ENCODE measurements at regions of chr16 and their contacts with region 1.

Region 1: DNA sequence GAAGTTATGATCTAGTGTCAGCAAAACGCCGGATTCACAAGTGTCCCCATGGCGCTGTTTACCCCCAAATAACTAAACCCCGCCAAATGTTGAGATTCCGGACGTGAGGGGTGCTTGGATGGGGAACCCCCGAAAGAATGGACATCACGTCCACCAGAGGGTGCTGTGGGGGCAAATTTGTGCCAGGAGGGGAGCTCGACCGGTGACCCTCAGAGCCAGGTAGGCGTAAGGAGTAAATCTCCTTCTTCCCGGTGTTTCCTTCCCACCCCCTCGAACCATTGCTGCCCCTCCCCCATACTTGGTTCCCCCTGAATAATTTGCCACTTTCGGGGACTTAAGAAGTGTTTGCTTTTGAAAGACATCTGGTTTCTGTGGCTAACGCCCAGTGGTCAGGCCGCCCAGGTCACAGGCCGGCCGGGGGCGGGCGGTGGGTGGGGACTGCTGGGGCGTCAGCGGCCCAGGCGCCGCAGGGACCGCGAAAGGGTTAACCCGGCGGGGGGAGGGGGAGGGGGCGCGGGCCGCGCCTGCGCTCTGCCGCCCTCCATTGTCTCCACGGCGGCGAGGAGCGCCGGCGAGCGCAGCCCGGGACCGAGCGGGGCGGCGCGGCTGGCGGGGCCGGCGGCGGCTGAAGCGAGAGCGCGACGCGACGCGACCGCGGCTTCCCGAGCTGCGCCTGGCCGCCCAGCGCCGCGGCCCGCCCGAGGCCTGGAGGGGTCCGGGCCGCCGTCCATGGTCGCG is at the start of gene ZNRF1:
- DNase-seq: peak; percentile 50 to 82 (median 67)
- ATAC-seq: peak; percentile 91
- H3K4me3 ChIP-seq: peak within 1 kb of the TSS; percentile 69
- H3K4me3 Mint-ChIP-seq: peak within 1 kb of the TSS; percentile 79 to 92 (median 87)
- H3K27ac ChIP-seq: peak within 1 kb of the TSS; percentile 54
- H3K27ac Mint-ChIP-seq: peak within 1 kb of the TSS; percentile 81 to 91 (median 86)
- H3K4me1 ChIP-seq: peaks cover 5 to 9% of the 10 kb centered on the region in 2 donors
- H3K4me1 Mint-ChIP-seq: peaks cover 5 to 42% (median 17%) of the 10 kb centered on the region in 7 donors
- H3K27me3 ChIP-seq: no peaks in the 10 kb centered on the region
- H3K27me3 Mint-ChIP-seq: peaks cover 0 to 19% (median 0%) of the 10 kb centered on the region in 5 donors
- total RNA-seq, gene ZNRF1: 1.8 to 27.9 (median 2.6) TPM

Region 2: GRCh38 chr16:74709441-74709877 is 289.2 kb before region 1 on chr16:
- CTCF ChIA-PET with region 1: no interaction called
- POLR2A ChIA-PET with region 1: no interaction called
- intact Hi-C with region 1: loop called (anchors 1 to 2 kb)
- DNase-seq: peak; percentile 62 to 86 (median 78)
- ATAC-seq: peak; percentile 99
- H3K4me3 ChIP-seq: no peak overlapping the region
- H3K4me3 Mint-ChIP-seq: no peak overlapping the region
- H3K27ac ChIP-seq: no peak overlapping the region
- H3K27ac Mint-ChIP-seq: peak overlapping the region in 5 of 9 donors; percentile 3 to 85 (median 29)
- H3K4me1 ChIP-seq: no peaks in the 10 kb centered on the region
- H3K4me1 Mint-ChIP-seq: peaks cover 4 to 10% (median 6%) of the 10 kb centered on the region in 7 donors
- H3K27me3 ChIP-seq: no peaks in the 10 kb centered on the region
- H3K27me3 Mint-ChIP-seq: peaks cover 0 to 6% (median 0%) of the 10 kb centered on the region in 5 donors

Region 3: GRCh38 chr16:74942977-74943918 is 55.4 kb before region 1 on chr16:
- CTCF ChIA-PET with region 1: no interaction called
- POLR2A ChIA-PET with region 1: no interaction called
- intact Hi-C with region 1: no loop called
- DNase-seq: no peak
- ATAC-seq: peak; percentile 40
- H3K4me3 ChIP-seq: no peak overlapping the region
- H3K4me3 Mint-ChIP-seq: no peak overlapping the region
- H3K27ac ChIP-seq: no peak overlapping the region
- H3K27ac Mint-ChIP-seq: peak overlapping the region in 3 of 9 donors; percentile 14 to 36 (median 28)
- H3K4me1 ChIP-seq: no peaks in the 10 kb centered on the region
- H3K4me1 Mint-ChIP-seq: peaks cover 0 to 6% (median 0%) of the 10 kb centered on the region in 7 donors
- H3K27me3 ChIP-seq: no peaks in the 10 kb centered on the region
- H3K27me3 Mint-ChIP-seq: no peaks in the 10 kb centered on the region

Region 4: GRCh38 chr16:74984535-74985296 is 13.9 kb before region 1 on chr16 and contains the start of gene WDR59:
- CTCF ChIA-PET with region 1: interaction called, 7 read pairs
- POLR2A ChIA-PET with region 1: interaction called, 5 read pairs
- intact Hi-C with region 1: loop called (anchors 1 kb)
- DNase-seq: peak; percentile 87 to 99 (median 98)
- ATAC-seq: peak; percentile 100
- H3K4me3 ChIP-seq: peak within 1 kb of the TSS; percentile 98
- H3K4me3 Mint-ChIP-seq: peak within 1 kb of the TSS; percentile 90 to 98 (median 95)
- H3K27ac ChIP-seq: peak within 1 kb of the TSS; percentile 86
- H3K27ac Mint-ChIP-seq: peak within 1 kb of the TSS; percentile 72 to 96 (median 92)
- H3K4me1 ChIP-seq: peaks cover 5 to 6% of the 10 kb centered on the region in 2 donors
- H3K4me1 Mint-ChIP-seq: peaks cover 0 to 27% (median 23%) of the 10 kb centered on the region in 7 donors
- H3K27me3 ChIP-seq: no peaks in the 10 kb centered on the region
- H3K27me3 Mint-ChIP-seq: no peaks in the 10 kb centered on the region
- total RNA-seq, gene WDR59: 82.7 to 130 (median 84.7) TPM

Region 5: GRCh38 chr16:75074920-75075687 is 76.5 kb after region 1 on chr16:
- CTCF ChIA-PET with region 1: no interaction called
- POLR2A ChIA-PET with region 1: no interaction called
- intact Hi-C with region 1: loop called (anchors 1 kb)
- DNase-seq: peak; percentile 45 to 86 (median 77)
- ATAC-seq: peak; percentile 97
- H3K4me3 ChIP-seq: peak overlapping the region; percentile 37
- H3K4me3 Mint-ChIP-seq: peak overlapping the region; percentile 58 to 83 (median 76)
- H3K27ac ChIP-seq: peak overlapping the region; percentile 36
- H3K27ac Mint-ChIP-seq: peak overlapping the region; percentile 84 to 100 (median 89)
- H3K4me1 ChIP-seq: peaks cover 16 to 38% of the 10 kb centered on the region in 2 donors
- H3K4me1 Mint-ChIP-seq: peaks cover 42 to 76% (median 64%) of the 10 kb centered on the region in 7 donors
- H3K27me3 ChIP-seq: no peaks in the 10 kb centered on the region
- H3K27me3 Mint-ChIP-seq: peaks cover 0 to 4% (median 0%) of the 10 kb centered on the region in 5 donors

Region 6: GRCh38 chr16:75555707-75556430 is 557.2 kb after region 1 on chr16 and contains the start of gene TMEM231:
- CTCF ChIA-PET with region 1: no interaction called
- POLR2A ChIA-PET with region 1: no interaction called
- intact Hi-C with region 1: loop called in 1 of 2 experiments (anchors 5 kb)
- DNase-seq: peak; percentile 91 to 97 (median 93)
- ATAC-seq: peak; percentile 98
- H3K4me3 ChIP-seq: peak within 1 kb of the TSS; percentile 84
- H3K4me3 Mint-ChIP-seq: peak within 1 kb of the TSS; percentile 74 to 93 (median 88)
- H3K27ac ChIP-seq: peak within 1 kb of the TSS; percentile 66
- H3K27ac Mint-ChIP-seq: peak within 1 kb of the TSS; percentile 81 to 97 (median 89)
- H3K4me1 ChIP-seq: peaks cover 10% of the 10 kb centered on the region in 2 donors
- H3K4me1 Mint-ChIP-seq: peaks cover 5 to 14% (median 10%) of the 10 kb centered on the region in 7 donors
- H3K27me3 ChIP-seq: no peaks in the 10 kb centered on the region
- H3K27me3 Mint-ChIP-seq: peaks cover 0 to 33% (median 5%) of the 10 kb centered on the region in 5 donors
- total RNA-seq, gene TMEM231: 1.5 to 3.9 (median 3.4) TPM

Measured in naive thymus-derived CD4-positive, alpha-beta T cell (primary cell).